Sciatic nerve (tissue), 2 donors: ENCODE measurements at regions of chr5 and their contacts with region 1.

Region 1: GRCh38 chr5:147822686-147823491 is 8.6 kb downstream of the SPINK1 start:
- DNase-seq: no peak
- ATAC-seq: peak; percentile 91

Region 2: GRCh38 chr5:147558826-147559225 is 264.1 kb before region 1 on chr5:
- intact Hi-C with region 1: no loop called
- DNase-seq: peak; percentile 73
- ATAC-seq: peak; percentile 77

Region 3: DNA sequence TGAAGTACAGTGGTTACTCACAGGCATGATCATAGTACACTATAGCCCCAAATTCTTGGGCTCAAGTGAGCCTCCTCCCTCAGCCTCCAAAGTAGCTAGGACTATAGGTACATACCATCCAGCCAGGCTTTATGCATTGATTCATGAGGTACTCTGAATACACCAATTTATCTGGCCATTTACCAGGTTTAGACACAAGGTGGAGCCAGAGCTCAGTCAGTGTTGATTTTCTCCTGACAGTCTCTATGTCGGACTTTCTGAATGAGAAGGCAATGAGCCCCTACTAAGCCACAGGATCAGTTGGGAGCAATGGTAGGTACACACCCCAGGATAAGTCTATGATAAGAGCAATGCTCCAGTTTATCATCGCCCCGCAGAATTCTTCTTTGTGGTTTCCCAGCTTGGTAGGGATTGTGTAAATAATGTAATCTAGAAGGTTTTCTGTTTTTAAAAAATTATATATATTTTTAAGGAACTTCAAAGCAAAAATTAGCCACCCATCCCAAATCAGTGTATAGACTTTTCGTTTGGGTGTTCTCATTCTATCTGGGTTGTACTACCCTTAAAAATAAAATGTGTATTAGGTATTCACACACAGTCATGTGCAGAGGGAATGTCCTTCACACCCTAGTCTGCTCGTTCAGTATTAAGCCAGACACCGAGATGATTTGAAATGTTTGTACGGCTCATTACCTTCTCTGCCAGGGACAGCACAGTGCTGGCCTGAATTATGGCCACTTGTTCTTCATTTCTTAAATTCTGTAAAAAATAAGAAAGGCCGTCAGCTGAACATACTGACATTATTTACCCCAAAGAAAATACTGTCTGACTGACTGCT is 194.6 kb before region 1 on chr5:
- intact Hi-C with region 1: loop called (anchors 10 kb)
- DNase-seq: peak; percentile 71
- ATAC-seq: peak; percentile 86

Region 4: DNA sequence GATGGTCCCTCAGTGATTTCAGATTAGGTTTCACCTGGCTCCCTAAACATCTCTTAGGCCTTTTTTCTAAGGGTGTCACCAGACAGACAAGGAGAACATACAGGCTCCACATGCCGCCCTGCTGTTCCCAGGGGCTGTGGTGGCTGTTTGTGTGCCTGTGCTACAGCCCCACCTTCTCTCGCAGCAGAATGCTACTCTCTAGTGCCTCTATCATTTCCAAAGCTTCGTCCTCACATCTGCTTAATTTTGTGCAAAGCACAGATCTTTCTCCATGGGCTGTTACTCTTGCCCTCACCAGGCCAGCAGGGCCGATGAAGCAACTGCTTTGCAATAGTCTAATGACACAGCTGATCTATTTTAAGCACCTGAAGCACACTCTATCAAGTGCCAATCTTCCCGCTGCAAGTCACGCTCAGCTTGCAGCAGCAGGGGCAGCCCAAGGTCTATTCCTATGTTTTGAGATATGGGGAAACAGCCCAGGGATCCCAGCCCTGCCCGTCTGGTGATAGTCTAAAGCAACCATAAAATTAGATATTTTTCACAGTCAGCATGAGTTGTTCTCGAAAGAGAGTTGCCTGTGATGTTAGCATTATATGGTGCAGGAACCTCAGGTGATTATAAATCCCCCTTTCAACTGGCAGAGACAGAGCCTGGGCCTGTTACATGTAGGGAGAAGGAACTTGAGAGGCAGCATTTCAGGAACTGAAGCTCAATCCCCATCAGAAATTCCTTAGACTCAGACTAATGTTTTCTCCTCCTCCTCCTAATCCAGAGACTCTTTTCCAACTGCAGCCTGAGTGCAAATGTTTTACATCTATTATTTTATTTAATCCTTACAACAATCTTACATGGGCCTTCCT is 1331.1 kb after region 1 on chr5:
- intact Hi-C with region 1: no loop called
- DNase-seq: no peak
- ATAC-seq: peak; percentile 23